Activated T-helper 1 cell treated with anti-CD3 and anti-CD28 coated beads, Interleukin-12 subunit alpha, Interleukin-12 subunit beta, Interleukin-2, Interleukin-4 antibody, amounts not matched to agents 30 ng/mL and 10 ng/mL and 1 ng/mL, durations not matched to agents 14 hours and 24 hours and 36 hours (primary cell): ENCODE measurements at regions of chr21 and their contacts with region 1.

Region 1: GRCh38 chr21:33514229-33514628 is 22.7 kb upstream of the DNAJC28 start:
- DNase-seq: no peak
- H3K4me3 Mint-ChIP-seq: no peak overlapping the region
- H3K27ac Mint-ChIP-seq: peak overlapping the region; percentile 42
- H3K4me1 Mint-ChIP-seq: peaks cover 18% of the 10 kb centered on the region
- H3K27me3 Mint-ChIP-seq: no peaks in the 10 kb centered on the region

Region 2: GRCh38 chr21:33308586-33309490 is 205.4 kb before region 1 on chr21:
- intact Hi-C with region 1: no loop called
- DNase-seq: no peak
- H3K4me3 Mint-ChIP-seq: no peak overlapping the region
- H3K27ac Mint-ChIP-seq: no peak overlapping the region
- H3K4me1 Mint-ChIP-seq: no peaks in the 10 kb centered on the region
- H3K27me3 Mint-ChIP-seq: peaks cover 7% of the 10 kb centered on the region

Region 3: DNA sequence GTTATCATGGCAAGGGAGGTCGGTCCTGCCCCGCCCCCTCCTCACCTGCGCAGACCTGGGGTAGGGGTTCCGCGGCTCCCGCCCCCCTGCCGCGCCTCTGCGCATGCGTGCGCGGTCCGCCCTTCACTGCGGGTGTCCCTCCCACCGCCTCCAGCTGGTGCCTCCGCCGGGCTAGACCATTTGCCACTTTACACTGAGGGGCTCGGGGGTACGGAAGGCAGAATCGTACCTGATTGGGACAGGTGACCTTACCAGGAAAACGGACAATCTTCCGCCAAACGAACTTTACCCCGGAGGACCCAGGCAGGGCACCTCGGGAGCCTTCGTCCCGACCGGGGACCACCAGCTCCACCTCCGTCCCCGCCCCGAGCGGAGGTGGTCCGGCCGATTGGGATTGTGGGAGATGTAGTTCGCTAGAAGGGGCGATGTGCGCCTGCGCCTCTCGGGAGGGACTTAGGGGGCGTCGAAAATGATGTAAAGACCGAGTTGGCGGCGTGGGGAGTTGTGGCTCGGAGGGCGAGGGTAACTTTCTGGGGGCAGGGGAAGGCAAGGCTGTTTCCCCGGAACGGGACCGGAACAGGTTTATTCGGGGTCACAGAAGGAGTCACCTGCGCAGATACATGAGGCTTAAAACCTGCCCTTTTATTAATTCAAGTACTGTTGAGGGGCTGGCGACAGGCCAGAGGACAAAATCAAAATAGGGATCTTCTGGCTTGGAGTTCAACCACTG is 22.7 kb before region 1 on chr21 and contains the start of gene DNAJC28:
- intact Hi-C with region 1: loop called (anchors 1 kb)
- DNase-seq: peak; percentile 91
- H3K4me3 Mint-ChIP-seq: peak within 1 kb of the TSS; percentile 84
- H3K27ac Mint-ChIP-seq: peak within 1 kb of the TSS; percentile 74
- H3K4me1 Mint-ChIP-seq: peaks cover 11% of the 10 kb centered on the region
- H3K27me3 Mint-ChIP-seq: peaks cover 12% of the 10 kb centered on the region
- total RNA-seq, gene DNAJC28: 0.12 and 0.18 TPM in 2 replicates